ENCODE measurements at regions of chr7 and their contacts with region 1.

Region 1: GRCh38 chr7:100611974-100612729 is at the start of gene MOSPD3:
- H3K4me3 ChIP-seq: peak within 1 kb of the TSS; percentile 70
- H3K27ac ChIP-seq: peak within 1 kb of the TSS; percentile 54; the same call in 1 of the 2 replicates
- H3K4me1 ChIP-seq: no peaks in the 10 kb centered on the region
- CTCF ChIP-seq: no peak

Region 2: GRCh38 chr7:100626530-100627237 is 14.5 kb after region 1 on chr7:
- CTCF ChIA-PET with region 1: interaction called, 11 read pairs
- POLR2A ChIA-PET with region 1: interaction called, 14 read pairs
- H3K4me3 ChIP-seq: peak overlapping the region; percentile 11
- H3K27ac ChIP-seq: no peak overlapping the region
- H3K4me1 ChIP-seq: no peaks in the 10 kb centered on the region
- CTCF ChIP-seq: no peak

Region 3: DNA sequence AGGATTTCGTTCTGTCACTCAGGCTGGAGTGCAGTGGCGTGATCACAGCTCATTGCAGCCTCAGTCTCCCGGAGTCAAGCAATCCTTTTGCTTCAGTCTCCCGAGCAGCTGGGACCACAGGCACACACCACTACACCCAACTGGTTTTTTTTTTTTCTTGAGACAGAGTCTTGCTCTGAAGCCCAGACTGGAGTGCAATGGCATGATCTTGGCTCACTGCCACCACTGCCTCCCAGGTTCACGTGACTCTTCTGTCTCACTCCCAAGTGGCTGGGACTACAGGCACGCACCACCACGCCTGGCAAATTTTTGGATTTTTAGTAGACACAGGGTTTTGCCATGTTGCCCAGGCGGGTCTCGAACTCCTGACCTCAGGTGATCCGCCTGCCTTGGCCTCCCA is 50.2 kb after region 1 on chr7:
- CTCF ChIA-PET with region 1: no interaction called
- POLR2A ChIA-PET with region 1: no interaction called
- H3K4me3 ChIP-seq: no peak overlapping the region
- H3K27ac ChIP-seq: no peak overlapping the region
- H3K4me1 ChIP-seq: no peaks in the 10 kb centered on the region
- CTCF ChIP-seq: no peak